ENCODE measurements at regions of chrX and their contacts with region 1.

Region 1: DNA sequence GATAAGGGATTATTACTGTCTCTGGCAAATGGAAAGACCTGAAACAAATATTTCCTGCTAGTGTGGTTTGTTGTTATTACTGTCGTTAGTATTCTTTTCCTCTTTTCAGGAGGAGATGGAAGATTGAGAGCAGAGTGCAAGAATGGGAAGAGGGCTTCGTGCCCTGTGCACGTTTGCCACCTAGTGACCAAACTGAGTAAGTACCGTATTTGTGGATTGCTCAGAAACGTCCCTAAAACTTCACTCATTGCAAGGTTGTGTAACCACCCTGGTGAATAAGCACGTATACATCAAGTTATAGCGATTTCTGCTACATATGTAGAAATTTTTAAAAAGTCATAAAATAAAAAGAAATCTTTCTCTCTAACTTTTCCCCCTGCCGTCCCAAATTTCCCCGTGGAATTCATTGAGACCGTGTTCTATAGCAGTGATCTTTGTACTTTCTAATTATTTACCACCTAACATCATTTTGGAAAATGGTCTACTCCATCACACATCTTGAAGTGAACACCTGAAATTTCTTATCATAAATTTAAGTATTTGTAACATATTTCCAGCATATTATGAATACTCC is 24.3 kb downstream of the LINC00632 start:
- DNase-seq: no peak
- H3K4me3 Mint-ChIP-seq: no peak overlapping the region
- H3K27ac Mint-ChIP-seq: no peak overlapping the region
- H3K4me1 Mint-ChIP-seq: no peaks in the 10 kb centered on the region
- H3K27me3 Mint-ChIP-seq: no peaks in the 10 kb centered on the region

Region 2: DNA sequence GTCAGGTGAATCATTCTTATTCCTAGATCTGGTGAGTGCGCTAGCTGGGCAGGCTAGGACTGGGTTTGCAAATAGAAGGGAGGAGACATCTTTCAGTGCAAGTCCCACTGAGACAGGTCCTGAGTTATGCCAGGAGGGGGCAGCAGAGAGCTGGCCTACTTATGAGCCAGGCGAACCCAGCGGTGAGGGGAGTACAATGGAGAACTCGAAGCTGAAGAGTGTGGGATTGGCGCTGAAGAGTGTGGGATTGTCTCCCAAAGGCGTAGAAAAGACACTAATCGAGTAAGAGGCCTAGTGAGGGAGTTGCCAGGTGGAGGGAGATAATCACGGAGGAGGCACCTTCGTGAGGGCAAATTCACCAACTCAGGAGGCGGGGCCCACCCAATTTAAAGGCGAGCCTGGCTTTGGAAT is 676.9 kb before region 1 on chrX:
- intact Hi-C with region 1: loop called (anchors 1 kb)
- DNase-seq: peak; percentile 4
- H3K4me3 Mint-ChIP-seq: no peak overlapping the region
- H3K27ac Mint-ChIP-seq: no peak overlapping the region
- H3K4me1 Mint-ChIP-seq: no peaks in the 10 kb centered on the region
- H3K27me3 Mint-ChIP-seq: no peaks in the 10 kb centered on the region

Region 3: GRCh38 chrX:140572724-140573123 is 161.1 kb before region 1 on chrX:
- intact Hi-C with region 1: loop called (anchors 2 kb)
- DNase-seq: no peak
- H3K4me3 Mint-ChIP-seq: no peak overlapping the region
- H3K27ac Mint-ChIP-seq: no peak overlapping the region
- H3K4me1 Mint-ChIP-seq: no peaks in the 10 kb centered on the region
- H3K27me3 Mint-ChIP-seq: no peaks in the 10 kb centered on the region

Region 4: GRCh38 chrX:140701480-140701879 is 32.4 kb before region 1 on chrX:
- intact Hi-C with region 1: loop called (anchors 1 kb)
- DNase-seq: no peak
- H3K4me3 Mint-ChIP-seq: no peak overlapping the region
- H3K27ac Mint-ChIP-seq: no peak overlapping the region
- H3K4me1 Mint-ChIP-seq: no peaks in the 10 kb centered on the region
- H3K27me3 Mint-ChIP-seq: no peaks in the 10 kb centered on the region

Measured in activated T-helper 1 cell treated with anti-CD3 and anti-CD28 coated beads, Interleukin-12 subunit alpha, Interleukin-12 subunit beta, Interleukin-2, Interleukin-4 antibody, amounts not matched to agents 30 ng/mL and 10 ng/mL and 1 ng/mL, durations not matched to agents 14 hours and 24 hours and 36 hours (primary cell).